GM10248 (cell line): ENCODE measurements at regions of chr6 and their contacts with region 1.

Region 1: DNA sequence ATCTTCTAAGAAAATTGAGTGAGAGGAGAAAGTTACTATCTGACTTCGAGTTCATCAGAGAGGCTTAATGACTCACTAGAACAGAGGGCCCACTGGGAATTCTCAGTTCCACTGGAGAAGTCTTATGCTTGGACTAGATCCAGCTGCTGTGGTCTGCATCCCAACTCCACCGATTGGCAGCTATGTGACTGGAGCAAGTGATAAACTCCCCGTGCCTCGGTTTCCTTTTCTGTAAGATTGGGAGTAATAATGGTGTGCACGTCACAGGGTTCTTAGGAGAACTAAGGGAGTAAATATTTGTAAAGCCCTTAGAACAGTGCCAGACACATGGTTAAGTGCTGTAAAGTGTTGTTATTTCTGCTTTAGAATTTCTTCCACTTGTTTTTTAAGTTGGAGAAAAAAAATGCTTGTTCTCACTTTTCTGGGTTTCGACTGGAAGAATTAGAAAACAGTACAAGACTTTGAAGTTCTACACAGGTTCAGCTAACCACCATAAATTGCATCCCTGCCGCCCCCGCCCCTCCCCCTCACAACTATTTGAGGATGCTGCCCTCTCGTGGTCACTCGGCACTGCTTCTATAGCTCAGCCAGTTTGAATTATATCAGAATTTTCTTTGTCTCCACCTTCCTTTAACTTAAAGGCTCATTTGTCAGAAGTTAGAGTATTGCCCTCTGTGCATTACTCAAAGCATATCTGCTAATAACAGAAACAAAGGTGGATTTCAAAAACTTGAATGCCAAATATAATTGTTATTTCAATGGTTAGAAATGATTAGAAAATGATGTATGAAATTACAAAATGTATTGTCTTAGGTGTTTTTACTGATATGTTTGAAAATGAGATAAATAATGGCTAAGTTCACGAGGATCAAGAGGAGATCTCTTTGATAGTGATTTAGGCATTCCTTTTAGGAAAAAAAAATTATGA is 95.0 kb upstream of the IFNGR1 start:
- DNase-seq: peak; percentile 64
- CTCF ChIP-seq: peak; percentile 82

Region 2: DNA sequence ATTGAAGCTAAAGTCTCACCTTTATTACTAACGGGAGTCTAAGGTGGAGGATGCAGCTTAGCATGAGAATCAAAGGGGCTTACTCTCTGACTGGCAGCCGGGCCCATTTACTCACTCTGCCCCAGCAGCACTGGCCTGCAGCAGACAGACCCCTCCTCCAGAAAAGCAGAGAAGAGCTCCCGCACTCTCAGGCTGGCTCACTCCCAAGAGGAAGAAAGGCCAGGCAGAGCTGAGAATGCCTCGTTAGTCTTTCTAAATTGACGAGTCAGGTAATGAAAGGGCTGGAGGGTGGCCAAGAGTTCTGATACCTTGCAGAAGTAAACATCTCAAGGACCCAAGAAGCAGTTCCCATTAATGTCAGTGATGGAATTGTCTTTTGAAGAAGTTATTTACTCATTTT is 224.9 kb before region 1 on chr6:
- CTCF ChIA-PET with region 1: interaction called, 40 read pairs
- POLR2A ChIA-PET with region 1: no interaction called
- DNase-seq: no peak
- CTCF ChIP-seq: no peak

Region 3: GRCh38 chr6:137156650-137157049 is 157.5 kb before region 1 on chr6:
- CTCF ChIA-PET with region 1: no interaction called
- POLR2A ChIA-PET with region 1: no interaction called
- DNase-seq: no peak
- CTCF ChIP-seq: no peak

Region 4: DNA sequence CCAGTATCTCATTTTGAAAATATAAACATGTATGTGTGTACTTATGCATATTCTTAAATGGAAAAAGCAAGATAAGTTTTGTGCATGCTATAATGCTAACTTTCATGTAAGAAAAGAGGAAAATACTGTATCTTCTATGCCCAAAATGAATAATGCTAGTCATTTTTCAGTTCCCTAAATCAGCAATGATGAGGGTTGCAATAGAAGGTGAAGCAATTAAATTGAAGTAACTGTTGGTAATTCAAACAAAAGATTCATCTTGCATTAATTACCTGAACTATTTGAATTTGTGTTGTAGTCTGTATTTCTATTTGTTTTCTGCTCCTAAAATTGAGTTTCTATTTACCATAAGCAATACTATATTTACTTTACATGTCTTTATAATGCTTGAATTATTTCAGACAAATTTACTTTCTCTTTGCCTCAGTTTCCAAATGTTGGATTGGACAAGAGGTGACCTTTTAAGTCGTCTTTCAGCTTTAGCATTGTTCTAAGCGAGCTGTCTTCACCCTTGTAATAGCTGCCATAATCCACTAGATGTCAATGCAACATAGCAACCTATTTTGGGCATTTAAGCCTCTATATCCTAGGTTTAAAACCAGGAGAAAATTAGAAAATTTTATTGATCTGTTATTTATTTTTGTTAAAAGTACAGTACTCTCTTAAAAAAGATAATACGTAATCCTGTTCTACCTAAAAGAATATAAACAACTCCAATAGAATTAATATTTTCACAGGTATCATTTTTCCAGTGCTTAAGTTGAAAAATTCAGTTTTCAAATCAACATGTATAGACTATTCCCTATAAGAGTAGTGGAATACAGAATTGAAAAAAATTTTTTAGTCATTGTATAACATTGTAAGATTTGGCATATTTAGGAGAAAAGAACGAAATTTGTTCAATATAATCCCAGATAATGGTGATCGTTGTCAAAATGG is 42.7 kb before region 1 on chr6:
- CTCF ChIA-PET with region 1: interaction called, 15 read pairs
- POLR2A ChIA-PET with region 1: no interaction called
- DNase-seq: peak; percentile 29
- CTCF ChIP-seq: peak; percentile 84

Region 5: GRCh38 chr6:137291441-137291840 is 22.8 kb before region 1 on chr6:
- CTCF ChIA-PET with region 1: interaction called, 16 read pairs
- POLR2A ChIA-PET with region 1: no interaction called
- DNase-seq: no peak
- CTCF ChIP-seq: no peak

Region 6: DNA sequence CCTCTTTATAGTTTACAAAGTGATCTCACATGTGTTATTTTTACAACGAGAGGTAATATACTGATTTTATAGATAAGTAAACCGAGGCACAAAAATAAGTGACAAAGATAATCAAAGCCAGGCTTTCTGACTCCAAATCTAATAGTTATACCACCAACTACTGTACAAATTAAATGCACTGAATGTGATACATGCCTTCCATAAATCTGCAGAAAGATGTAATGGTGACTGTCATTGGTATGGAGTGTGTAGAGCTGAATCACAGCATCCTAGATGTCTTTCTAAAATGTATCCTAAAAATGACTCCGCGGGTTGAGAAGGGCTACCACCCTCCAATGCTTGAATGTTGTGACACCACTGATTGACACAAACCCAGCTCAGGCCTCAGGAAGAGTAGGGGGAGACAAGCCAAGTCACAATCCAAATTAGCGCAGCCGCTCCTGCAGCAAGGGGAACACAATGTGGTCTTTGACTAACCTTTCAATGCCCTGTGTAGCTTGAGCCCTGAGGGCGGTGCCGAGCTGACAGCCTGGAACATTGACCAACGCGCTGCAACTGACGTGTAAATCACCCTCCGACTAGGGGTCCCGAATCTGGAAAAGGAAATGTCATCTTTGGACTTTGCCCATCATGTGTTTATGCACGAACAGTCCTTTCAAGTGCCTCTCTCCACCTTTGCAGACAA is 43.2 kb after region 1 on chr6:
- CTCF ChIA-PET with region 1: no interaction called
- POLR2A ChIA-PET with region 1: no interaction called
- DNase-seq: no peak
- CTCF ChIP-seq: no peak